Activated T-helper 1 cell treated with anti-CD3 and anti-CD28 coated beads, Interleukin-12 subunit alpha, Interleukin-12 subunit beta, Interleukin-2, Interleukin-4 antibody, amounts not matched to agents 30 ng/mL and 10 ng/mL and 1 ng/mL, durations not matched to agents 14 hours and 24 hours and 36 hours (primary cell): ENCODE measurements at regions of chr2 and their contacts with region 1.

Region 1: DNA sequence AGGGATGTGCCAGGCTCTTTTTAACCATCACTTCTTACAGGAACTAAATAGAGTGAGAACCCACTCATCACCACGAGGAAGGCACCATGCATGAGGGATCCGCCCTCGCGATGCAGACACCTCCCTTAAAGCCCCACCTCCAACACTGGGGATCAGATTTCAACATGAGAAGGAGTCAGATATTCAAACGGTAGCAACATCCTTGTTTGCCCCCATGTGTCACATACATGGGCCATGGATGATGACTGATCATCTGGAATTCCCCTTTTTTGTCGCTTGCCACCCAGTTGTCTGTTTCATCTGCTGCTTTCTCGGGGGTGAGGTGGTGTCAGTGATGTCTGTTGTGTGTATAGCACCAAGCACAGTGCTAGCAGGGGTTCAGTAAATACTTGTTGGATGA is 57.9 kb downstream of the NCK2 start:
- DNase-seq: peak; percentile 70
- H3K4me3 Mint-ChIP-seq: peak overlapping the region; percentile 58
- H3K27ac Mint-ChIP-seq: peak overlapping the region; percentile 88
- H3K4me1 Mint-ChIP-seq: peaks cover 93% of the 10 kb centered on the region
- H3K27me3 Mint-ChIP-seq: no peaks in the 10 kb centered on the region

Region 2: DNA sequence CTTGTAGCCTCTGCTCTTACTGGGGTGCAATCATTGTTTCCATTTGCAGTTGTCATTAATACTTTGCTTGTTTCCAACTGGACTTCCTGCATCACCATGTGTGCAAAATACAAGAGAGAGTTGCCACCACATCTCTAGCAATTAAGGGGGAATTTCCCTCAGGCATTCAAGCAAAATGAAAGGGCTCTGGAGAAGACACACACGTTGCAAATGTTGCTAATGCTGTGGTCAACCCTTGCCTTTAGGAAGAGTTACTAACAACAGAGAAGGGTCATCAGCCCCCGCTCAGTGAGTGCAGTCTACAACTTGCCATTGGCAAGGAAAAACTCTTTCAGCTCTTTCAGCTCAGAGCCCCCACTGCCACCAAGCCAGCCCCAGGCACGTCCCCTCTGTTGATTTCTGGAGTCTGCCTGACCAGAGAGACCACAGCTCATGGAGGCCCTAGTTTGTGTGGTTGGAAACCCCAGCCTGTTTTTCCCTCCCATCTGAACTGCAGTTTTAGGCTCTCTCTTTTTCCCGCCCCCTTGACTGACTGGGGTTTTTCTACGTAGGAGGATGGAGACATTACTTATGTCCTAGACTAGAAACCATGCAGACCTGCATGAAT is 586.9 kb before region 1 on chr2:
- intact Hi-C with region 1: no loop called
- DNase-seq: no peak
- H3K4me3 Mint-ChIP-seq: no peak overlapping the region
- H3K27ac Mint-ChIP-seq: no peak overlapping the region
- H3K4me1 Mint-ChIP-seq: no peaks in the 10 kb centered on the region
- H3K27me3 Mint-ChIP-seq: peaks cover 1% of the 10 kb centered on the region

Region 3: GRCh38 chr2:105645031-105645937 is 157.3 kb before region 1 on chr2:
- intact Hi-C with region 1: loop called (anchors 1 kb)
- DNase-seq: no peak
- H3K4me3 Mint-ChIP-seq: no peak overlapping the region
- H3K27ac Mint-ChIP-seq: no peak overlapping the region
- H3K4me1 Mint-ChIP-seq: no peaks in the 10 kb centered on the region
- H3K27me3 Mint-ChIP-seq: peaks cover 10% of the 10 kb centered on the region

Region 4: GRCh38 chr2:105789745-105790460 is 12.7 kb before region 1 on chr2:
- intact Hi-C with region 1: loop called (anchors 1 kb)
- DNase-seq: peak; percentile 66
- H3K4me3 Mint-ChIP-seq: peak overlapping the region; percentile 66
- H3K27ac Mint-ChIP-seq: peak overlapping the region; percentile 92
- H3K4me1 Mint-ChIP-seq: peaks cover 85% of the 10 kb centered on the region
- H3K27me3 Mint-ChIP-seq: no peaks in the 10 kb centered on the region

Region 5: DNA sequence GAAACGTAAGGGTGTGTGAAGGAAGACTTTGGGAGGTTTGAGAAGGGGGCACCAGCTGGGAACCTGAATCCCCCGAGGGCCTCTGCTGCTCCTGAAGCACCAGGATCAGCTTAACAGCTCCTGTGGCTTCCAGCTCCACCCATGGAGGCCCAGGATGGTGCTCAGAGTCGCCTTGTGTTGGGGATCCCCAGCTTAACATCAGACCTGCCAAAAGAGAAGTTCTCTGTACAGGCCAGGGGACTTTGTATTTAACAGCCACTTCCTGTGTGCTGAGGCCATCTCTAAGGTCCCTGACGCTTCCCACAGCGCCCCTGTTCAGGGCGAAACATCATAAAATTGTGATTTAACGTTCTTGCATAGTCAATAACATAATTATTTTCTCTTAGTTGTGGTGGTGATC is 19.6 kb after region 1 on chr2:
- intact Hi-C with region 1: loop called (anchors 2 kb)
- DNase-seq: no peak
- H3K4me3 Mint-ChIP-seq: no peak overlapping the region
- H3K27ac Mint-ChIP-seq: peak overlapping the region; percentile 51
- H3K4me1 Mint-ChIP-seq: peaks cover 69% of the 10 kb centered on the region
- H3K27me3 Mint-ChIP-seq: no peaks in the 10 kb centered on the region

Region 6: GRCh38 chr2:105836840-105837692 is 34.5 kb after region 1 on chr2:
- intact Hi-C with region 1: loop called (anchors 1 kb)
- DNase-seq: no peak
- H3K4me3 Mint-ChIP-seq: peak overlapping the region; percentile 44
- H3K27ac Mint-ChIP-seq: peak overlapping the region; percentile 61
- H3K4me1 Mint-ChIP-seq: peaks cover 89% of the 10 kb centered on the region
- H3K27me3 Mint-ChIP-seq: no peaks in the 10 kb centered on the region

Region 7: GRCh38 chr2:105873721-105874120 is 71.1 kb after region 1 on chr2:
- intact Hi-C with region 1: loop called (anchors 1 kb)
- DNase-seq: peak; percentile 44
- H3K4me3 Mint-ChIP-seq: peak overlapping the region; percentile 61
- H3K27ac Mint-ChIP-seq: peak overlapping the region; percentile 89
- H3K4me1 Mint-ChIP-seq: peaks cover 87% of the 10 kb centered on the region
- H3K27me3 Mint-ChIP-seq: no peaks in the 10 kb centered on the region

Region 8: GRCh38 chr2:106085181-106085940 is 282.8 kb after region 1 on chr2:
- intact Hi-C with region 1: loop called (anchors 1 kb)
- DNase-seq: peak; percentile 41
- H3K4me3 Mint-ChIP-seq: peak overlapping the region; percentile 38
- H3K27ac Mint-ChIP-seq: peak overlapping the region; percentile 76
- H3K4me1 Mint-ChIP-seq: peaks cover 18% of the 10 kb centered on the region
- H3K27me3 Mint-ChIP-seq: no peaks in the 10 kb centered on the region